HepG2 (cell line): ENCODE measurements at regions of chr4 and their contacts with region 1.

Region 1: DNA sequence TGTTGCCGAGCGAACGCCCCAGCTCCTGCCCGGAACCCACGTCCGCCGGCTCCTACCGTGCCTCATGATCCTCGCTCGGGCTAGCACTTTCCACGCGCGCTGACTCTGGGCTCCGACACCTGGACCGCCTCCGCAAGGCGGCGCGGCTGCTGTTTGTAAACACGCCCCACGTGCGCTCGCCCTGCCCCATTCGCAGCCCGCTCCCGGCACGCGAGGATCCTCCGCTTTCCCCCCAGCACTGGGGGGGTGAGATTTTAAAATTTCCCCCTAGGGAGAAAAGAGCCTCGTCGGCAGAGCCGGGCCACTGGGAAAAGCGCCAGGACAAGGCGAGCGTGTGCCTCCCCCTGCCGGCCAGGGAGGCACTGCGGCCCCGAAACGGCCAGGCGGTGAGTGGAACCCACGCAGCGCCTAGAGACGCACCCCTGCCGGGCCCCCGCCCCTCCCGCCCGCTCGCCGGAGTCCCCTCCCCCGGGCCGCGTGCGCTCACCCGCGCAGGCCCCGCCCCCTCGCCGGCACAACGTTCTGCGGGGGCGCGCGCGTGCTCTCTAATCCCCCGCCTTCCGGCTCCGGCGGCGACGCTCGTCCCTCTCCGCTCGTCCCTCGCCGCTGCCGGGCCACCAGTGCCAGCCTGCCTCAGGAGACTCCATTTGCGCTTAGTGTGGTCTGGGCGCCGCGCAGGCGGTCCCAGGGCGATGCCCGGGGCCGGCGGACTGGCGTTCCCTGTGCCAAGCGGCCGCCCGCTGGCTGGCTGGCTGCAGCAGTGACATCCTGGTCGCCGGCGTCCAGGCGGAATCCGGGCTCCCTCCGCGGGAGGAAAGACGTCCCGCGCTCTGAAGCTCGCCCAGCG is at the start of gene TIGD2:
- DNase-seq: peak; percentile 69
- ATAC-seq: peak; percentile 84
- H3K4me3 ChIP-seq: peak within 1 kb of the TSS; percentile 78 to 83 (median 79)
- H3K27ac ChIP-seq: peak within 1 kb of the TSS; percentile 87
- H3K4me1 ChIP-seq: peaks cover 49% of the 10 kb centered on the region
- H3K27me3 ChIP-seq: peaks cover 0 to 4% of the 10 kb centered on the region in 2 experiments; a peak in 1 of 5 replicates
- CTCF ChIP-seq: peak; percentile 77
- EP300 ChIP-seq: no peak
- POLR2A ChIP-seq: peak; percentile 73 to 88
- RAD21 ChIP-seq: peak; percentile 60
- total RNA-seq, gene TIGD2: 15.5 and 16.7 TPM in 2 replicates

Region 2: GRCh38 chr4:88137112-88137511 is 974.1 kb before region 1 on chr4:
- CTCF ChIA-PET with region 1: no interaction called
- POLR2A ChIA-PET with region 1: no interaction called
- in situ Hi-C with region 1: no loop called
- intact Hi-C with region 1: no loop called
- DNase-seq: no peak
- ATAC-seq: no peak
- H3K4me3 ChIP-seq: no peak overlapping the region
- H3K27ac ChIP-seq: no peak overlapping the region
- H3K4me1 ChIP-seq: peaks cover 17% of the 10 kb centered on the region
- H3K27me3 ChIP-seq: no peaks in the 10 kb centered on the region
- CTCF ChIP-seq: no peak
- EP300 ChIP-seq: no peak
- POLR2A ChIP-seq: no peak
- RAD21 ChIP-seq: no peak

Region 3: DNA sequence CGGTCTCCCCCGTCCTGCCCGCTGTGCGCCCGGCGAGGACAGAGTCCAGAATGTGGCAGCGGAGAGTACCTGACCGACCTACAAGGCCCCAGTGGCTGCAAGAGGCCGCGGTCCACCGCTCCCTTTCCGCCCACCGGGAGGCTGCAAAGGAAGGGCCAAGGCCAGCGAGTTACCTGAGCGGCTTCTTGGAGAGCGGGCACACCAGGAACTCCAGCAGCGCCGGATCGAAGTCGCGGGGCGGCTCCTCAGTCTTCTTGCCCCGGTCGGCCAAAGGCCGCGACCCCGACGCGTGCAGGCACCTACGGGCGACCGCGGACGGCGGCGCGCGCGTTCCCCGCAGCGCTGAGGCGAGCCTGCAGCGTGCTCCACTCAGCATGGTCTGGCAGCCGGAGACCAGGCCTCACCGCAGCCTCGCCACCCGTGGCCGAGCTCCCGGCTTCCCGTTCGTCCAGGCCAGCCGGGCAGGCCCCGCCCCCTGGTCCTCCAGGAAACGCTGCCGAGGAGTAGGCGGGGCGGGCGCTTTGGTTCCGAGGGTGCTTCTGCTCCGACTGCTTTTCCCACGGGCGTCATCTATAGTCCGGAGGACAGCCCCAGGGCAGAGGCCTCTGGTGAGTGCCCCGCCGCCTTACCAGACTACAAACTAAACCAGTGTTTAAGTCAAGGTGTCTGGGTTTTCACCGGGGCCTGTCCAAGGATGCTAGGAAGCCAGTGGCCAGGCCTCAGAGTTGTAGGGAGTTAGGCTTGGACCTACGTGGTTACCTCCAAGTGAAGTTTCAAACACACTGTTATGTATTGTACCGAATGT is 587.7 kb before region 1 on chr4 and contains the start of gene PYURF:
- CTCF ChIA-PET with region 1: no interaction called
- POLR2A ChIA-PET with region 1: no interaction called
- in situ Hi-C with region 1: no loop called
- intact Hi-C with region 1: loop called (anchors 5 kb)
- DNase-seq: peak; percentile 86
- ATAC-seq: peak; percentile 97
- H3K4me3 ChIP-seq: peak within 1 kb of the TSS; percentile 95 to 98 (median 96)
- H3K27ac ChIP-seq: peak within 1 kb of the TSS; percentile 94
- H3K4me1 ChIP-seq: peaks cover 28% of the 10 kb centered on the region
- H3K27me3 ChIP-seq: no peaks in the 10 kb centered on the region
- CTCF ChIP-seq: peak; percentile 43
- EP300 ChIP-seq: no peak
- POLR2A ChIP-seq: peak; percentile 87 to 95
- RAD21 ChIP-seq: peak; percentile 31; the same call in 1 of the 2 replicates
- total RNA-seq, gene PYURF: 95.2 and 121 TPM in 2 replicates

Region 4: GRCh38 chr4:88814043-88814617 is 297.1 kb before region 1 on chr4:
- CTCF ChIA-PET with region 1: interaction called, 4 read pairs
- POLR2A ChIA-PET with region 1: no interaction called
- in situ Hi-C with region 1: loop called (anchors 5 kb)
- intact Hi-C with region 1: loop called (anchors 5 kb)
- DNase-seq: no peak
- ATAC-seq: peak; percentile 76
- H3K4me3 ChIP-seq: no peak overlapping the region
- H3K27ac ChIP-seq: no peak overlapping the region
- H3K4me1 ChIP-seq: peaks cover 97% of the 10 kb centered on the region
- H3K27me3 ChIP-seq: no peaks in the 10 kb centered on the region
- CTCF ChIP-seq: peak; percentile 15; the same call in 1 of the 2 replicates
- EP300 ChIP-seq: no peak
- POLR2A ChIP-seq: no peak
- RAD21 ChIP-seq: no peak

Region 5: DNA sequence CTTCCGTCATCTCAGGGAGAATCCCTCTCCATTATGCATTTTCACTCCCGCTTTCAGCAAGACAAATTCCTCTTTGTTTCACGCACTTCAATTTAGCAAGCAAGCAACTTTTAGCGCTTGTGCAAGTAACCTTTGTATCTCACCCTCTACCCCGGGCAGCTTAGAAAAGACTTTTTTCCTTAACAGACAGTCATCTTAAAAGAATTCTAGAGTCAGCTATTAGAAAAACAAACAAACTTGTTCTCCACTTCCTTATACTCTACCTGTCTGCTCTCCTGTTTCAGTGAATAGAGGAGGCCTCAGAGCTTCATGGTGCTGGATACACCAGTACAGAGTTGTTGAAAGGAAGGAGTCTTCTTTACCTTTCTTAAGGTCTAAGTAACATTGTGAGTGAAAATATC is 12.2 kb after region 1 on chr4:
- CTCF ChIA-PET with region 1: no interaction called
- POLR2A ChIA-PET with region 1: interaction called, 6 read pairs
- in situ Hi-C with region 1: no loop called
- intact Hi-C with region 1: loop called (anchors 1 kb)
- DNase-seq: peak; percentile 73
- ATAC-seq: peak; percentile 51
- H3K4me3 ChIP-seq: peak overlapping the region; percentile 43 to 58 (median 49); a peak in 5 of 6 replicates
- H3K27ac ChIP-seq: peak overlapping the region; percentile 51
- H3K4me1 ChIP-seq: peaks cover 34% of the 10 kb centered on the region
- H3K27me3 ChIP-seq: no peaks in the 10 kb centered on the region
- CTCF ChIP-seq: no peak
- EP300 ChIP-seq: no peak; a peak in 1 of 4 replicates
- POLR2A ChIP-seq: no peak
- RAD21 ChIP-seq: no peak

Region 6: DNA sequence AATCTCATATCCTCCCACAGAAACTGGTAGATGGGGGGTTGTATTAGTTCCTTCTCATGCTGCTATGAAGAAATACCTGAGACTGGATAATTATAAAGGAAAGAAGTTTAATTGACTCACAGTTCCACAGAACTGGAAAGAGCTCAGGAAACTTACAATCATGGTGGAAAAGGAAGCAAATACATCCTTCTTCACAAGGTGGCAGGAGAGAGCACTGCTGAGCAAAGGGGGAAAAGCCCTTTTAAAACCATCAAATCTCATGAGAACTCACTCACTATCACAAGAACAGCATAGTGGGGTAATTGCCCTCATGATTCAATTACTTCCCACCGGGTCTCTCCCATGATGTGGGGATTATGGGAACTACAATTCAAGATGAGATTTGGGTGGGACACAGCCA is 446.9 kb after region 1 on chr4:
- CTCF ChIA-PET with region 1: no interaction called
- POLR2A ChIA-PET with region 1: no interaction called
- in situ Hi-C with region 1: no loop called
- intact Hi-C with region 1: no loop called
- DNase-seq: no peak
- ATAC-seq: no peak
- H3K4me3 ChIP-seq: no peak overlapping the region
- H3K27ac ChIP-seq: no peak overlapping the region
- H3K4me1 ChIP-seq: no peaks in the 10 kb centered on the region
- H3K27me3 ChIP-seq: no peaks in the 10 kb centered on the region; a peak in 1 of 5 replicates
- CTCF ChIP-seq: peak; percentile 30; the same call in 1 of the 2 replicates
- EP300 ChIP-seq: no peak
- POLR2A ChIP-seq: no peak
- RAD21 ChIP-seq: no peak

Region 7: DNA sequence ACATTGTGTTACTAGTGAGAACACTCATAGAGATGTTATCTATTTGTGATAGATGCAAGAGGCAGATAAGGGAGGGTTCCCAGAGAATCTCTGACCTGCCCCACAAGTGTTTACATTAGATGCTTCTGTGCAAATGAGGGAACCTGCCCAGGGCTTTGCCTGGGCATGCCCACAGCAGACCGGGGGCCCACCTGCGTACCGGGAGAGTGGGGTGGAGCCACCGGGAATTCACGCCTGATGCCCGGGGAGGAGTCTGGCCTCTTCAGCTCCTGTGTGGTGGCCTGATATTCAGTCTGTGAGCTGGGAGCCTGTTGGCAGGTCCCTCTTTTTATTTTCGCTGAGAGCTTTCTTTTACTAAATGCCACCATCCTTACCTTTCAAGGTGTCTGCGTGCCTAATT is 570.0 kb after region 1 on chr4:
- CTCF ChIA-PET with region 1: no interaction called
- POLR2A ChIA-PET with region 1: no interaction called
- in situ Hi-C with region 1: no loop called
- intact Hi-C with region 1: loop called (anchors 2 kb)
- DNase-seq: peak; percentile 82
- ATAC-seq: peak; percentile 100
- H3K4me3 ChIP-seq: peak overlapping the region; percentile 52 to 79 (median 64); a peak in 5 of 6 replicates
- H3K27ac ChIP-seq: peak overlapping the region; percentile 72
- H3K4me1 ChIP-seq: peaks cover 36% of the 10 kb centered on the region
- H3K27me3 ChIP-seq: no peaks in the 10 kb centered on the region
- CTCF ChIP-seq: no peak
- EP300 ChIP-seq: peak in 1 of 2 experiments; percentile 42; a peak in 1 of 4 replicates
- POLR2A ChIP-seq: peak; percentile 89 to 90
- RAD21 ChIP-seq: no peak